ENCODE measurements at regions of chr22 and their contacts with region 1.

Region 1: GRCh38 chr22:40636380-40637182 is at the start of gene MRTFA:
- H3K4me3 ChIP-seq: peak within 1 kb of the TSS; percentile 96
- H3K27ac ChIP-seq: peak within 1 kb of the TSS; percentile 89
- H3K4me1 ChIP-seq: peaks cover 12% of the 10 kb centered on the region; the same call in 1 of the 2 replicates
- CTCF ChIP-seq: peak; percentile 53; the same call in 1 of the 2 replicates

Region 2: GRCh38 chr22:40533712-40534378 is 102.7 kb before region 1 on chr22:
- CTCF ChIA-PET with region 1: interaction called, 4 read pairs
- POLR2A ChIA-PET with region 1: interaction called, 27 read pairs
- H3K4me3 ChIP-seq: peak overlapping the region; percentile 27
- H3K27ac ChIP-seq: peak overlapping the region; percentile 81
- H3K4me1 ChIP-seq: peaks cover 37% of the 10 kb centered on the region
- CTCF ChIP-seq: no peak

Region 3: DNA sequence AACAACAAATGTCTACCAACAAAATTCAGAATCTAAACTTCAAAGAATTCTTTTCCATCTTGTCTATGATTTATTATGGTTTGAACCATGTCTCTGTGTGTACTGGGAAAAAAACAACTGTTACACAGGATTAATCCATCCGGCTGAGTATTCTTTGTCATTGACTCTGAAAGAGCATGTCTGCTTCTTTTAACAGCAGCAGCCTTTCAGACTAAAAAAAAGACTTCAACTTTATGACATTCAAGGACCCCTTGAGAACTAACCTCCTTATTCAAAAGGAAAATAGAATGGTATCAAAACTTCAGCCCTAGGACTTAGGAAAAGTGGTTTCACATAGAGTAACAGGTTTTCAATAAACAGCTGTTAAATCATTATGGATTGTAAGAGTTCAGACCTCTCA is 79.9 kb before region 1 on chr22:
- CTCF ChIA-PET with region 1: no interaction called
- POLR2A ChIA-PET with region 1: interaction called, 14 read pairs
- H3K4me3 ChIP-seq: no peak overlapping the region
- H3K27ac ChIP-seq: no peak overlapping the region
- H3K4me1 ChIP-seq: peaks cover 2% of the 10 kb centered on the region; the same call in 1 of the 2 replicates
- CTCF ChIP-seq: no peak

Region 4: GRCh38 chr22:40605676-40606250 is 30.8 kb before region 1 on chr22:
- CTCF ChIA-PET with region 1: interaction called, 3 read pairs
- POLR2A ChIA-PET with region 1: interaction called, 15 read pairs
- H3K4me3 ChIP-seq: no peak overlapping the region
- H3K27ac ChIP-seq: no peak overlapping the region
- H3K4me1 ChIP-seq: peaks cover 43% of the 10 kb centered on the region
- CTCF ChIP-seq: no peak

Region 5: DNA sequence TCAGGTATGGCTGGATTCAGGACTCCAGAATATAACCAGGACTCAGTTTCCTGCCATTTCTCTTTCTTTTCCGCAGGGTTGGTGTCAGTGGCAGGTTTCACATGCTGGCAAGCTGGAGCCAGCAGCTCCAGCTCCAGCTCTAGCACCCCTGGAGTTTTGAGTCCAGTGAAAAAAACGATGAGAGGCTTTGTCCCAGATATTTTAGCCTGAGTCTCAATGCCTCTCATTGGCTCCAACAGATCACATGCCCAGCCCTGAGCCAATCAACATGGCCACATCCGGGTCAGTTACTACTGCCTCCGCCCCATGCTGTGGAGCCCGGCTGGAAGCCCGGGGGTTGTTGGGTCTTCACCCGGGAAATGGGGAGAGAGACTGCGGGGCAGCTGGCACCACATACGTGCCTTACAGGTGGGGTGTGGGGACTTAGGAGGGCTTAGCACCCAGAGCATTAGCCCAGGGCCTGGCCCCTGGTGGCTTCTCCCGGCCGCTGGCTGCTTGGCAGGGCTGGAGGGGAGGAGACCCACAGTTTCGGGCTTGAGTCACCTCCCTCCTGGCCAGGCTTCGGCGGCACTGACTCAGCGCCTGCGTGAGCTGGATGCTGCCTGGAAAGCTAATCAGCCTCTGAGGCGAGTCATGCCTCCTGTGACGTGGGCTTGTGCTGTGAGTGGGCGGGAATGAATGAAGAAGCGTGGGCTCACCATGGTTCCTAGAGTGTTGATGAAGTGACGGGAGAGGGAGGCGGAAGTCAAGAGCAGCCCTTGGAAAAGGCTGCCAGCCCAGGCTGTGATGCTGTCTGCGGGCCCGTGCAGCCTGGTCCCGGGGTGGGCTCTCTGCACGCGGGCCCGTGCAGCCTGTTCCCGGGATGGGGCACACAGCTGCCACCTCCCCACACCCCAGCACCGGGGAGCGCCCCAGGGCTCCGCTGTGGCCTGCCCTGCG is 15.3 kb after region 1 on chr22:
- CTCF ChIA-PET with region 1: interaction called, 17 read pairs
- POLR2A ChIA-PET with region 1: interaction called, 31 read pairs
- H3K4me3 ChIP-seq: peak overlapping the region; percentile 71
- H3K27ac ChIP-seq: peak overlapping the region; percentile 88
- H3K4me1 ChIP-seq: peaks cover 3% of the 10 kb centered on the region; the same call in 1 of the 2 replicates
- CTCF ChIP-seq: no peak